A549 (cell line): ENCODE measurements at regions of chr15 and their contacts with region 1.

Region 1: GRCh38 chr15:88904624-88905327 is 8.4 kb downstream of the MFGE8 start:
- DNase-seq: peak; percentile 82 to 89
- ATAC-seq: peak; percentile 64 to 88
- H3K4me3 ChIP-seq: no peak overlapping the region
- H3K27ac ChIP-seq: peak overlapping the region; percentile 49 to 71
- H3K4me1 ChIP-seq: peaks cover 33% of the 10 kb centered on the region
- CTCF ChIP-seq: peak; percentile 99
- EP300 ChIP-seq: no peak
- POLR2A ChIP-seq: no peak
- RAD21 ChIP-seq: peak; percentile 97

Region 2: GRCh38 chr15:88571153-88571851 is 333.5 kb before region 1 on chr15:
- CTCF ChIA-PET with region 1: no interaction called
- POLR2A ChIA-PET with region 1: no interaction called
- DNase-seq: no peak
- ATAC-seq: no peak
- H3K4me3 ChIP-seq: no peak overlapping the region
- H3K27ac ChIP-seq: no peak overlapping the region
- H3K4me1 ChIP-seq: no peaks in the 10 kb centered on the region
- CTCF ChIP-seq: no peak
- EP300 ChIP-seq: no peak
- POLR2A ChIP-seq: no peak
- RAD21 ChIP-seq: no peak

Region 3: DNA sequence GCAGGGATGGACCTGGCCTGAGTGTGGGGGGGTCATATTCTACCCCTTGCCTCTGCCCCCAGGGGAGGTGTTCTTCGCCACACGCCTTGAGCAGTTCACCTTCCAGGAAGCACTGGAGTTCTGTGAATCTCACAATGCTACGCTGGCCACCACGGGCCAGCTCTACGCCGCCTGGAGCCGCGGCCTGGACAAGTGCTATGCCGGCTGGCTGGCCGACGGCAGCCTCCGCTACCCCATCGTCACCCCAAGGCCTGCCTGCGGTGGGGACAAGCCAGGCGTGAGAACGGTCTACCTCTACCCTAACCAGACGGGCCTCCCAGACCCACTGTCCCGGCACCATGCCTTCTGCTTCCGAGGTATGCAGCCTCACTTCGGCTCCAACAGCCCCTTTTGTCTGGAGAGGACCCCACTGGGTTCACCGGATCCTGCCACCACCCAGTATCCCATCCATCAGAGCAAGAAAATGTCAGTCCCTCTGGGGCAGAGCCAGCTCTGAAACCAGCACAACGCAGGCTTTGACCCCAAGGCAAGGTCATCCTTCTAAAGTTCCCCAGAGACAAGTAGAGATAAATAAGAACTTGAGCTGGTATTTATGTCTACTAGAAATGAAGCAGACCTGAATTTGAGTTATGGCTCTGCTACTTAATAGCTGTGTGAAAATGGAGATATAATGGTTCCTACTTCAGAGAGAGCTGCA is 55.3 kb before region 1 on chr15:
- CTCF ChIA-PET with region 1: no interaction called
- POLR2A ChIA-PET with region 1: no interaction called
- DNase-seq: no peak
- ATAC-seq: no peak
- H3K4me3 ChIP-seq: no peak overlapping the region
- H3K27ac ChIP-seq: no peak overlapping the region
- H3K4me1 ChIP-seq: no peaks in the 10 kb centered on the region
- CTCF ChIP-seq: no peak
- EP300 ChIP-seq: no peak
- POLR2A ChIP-seq: no peak
- RAD21 ChIP-seq: no peak

Region 4: GRCh38 chr15:88878720-88879184 is 26.0 kb before region 1 on chr15:
- CTCF ChIA-PET with region 1: interaction called, 212 read pairs
- POLR2A ChIA-PET with region 1: no interaction called
- DNase-seq: peak; percentile 68 to 87
- ATAC-seq: peak; percentile 91 to 95
- H3K4me3 ChIP-seq: no peak overlapping the region
- H3K27ac ChIP-seq: no peak overlapping the region
- H3K4me1 ChIP-seq: no peaks in the 10 kb centered on the region
- CTCF ChIP-seq: peak; percentile 78
- EP300 ChIP-seq: no peak
- POLR2A ChIP-seq: no peak
- RAD21 ChIP-seq: peak; percentile 70 to 82

Region 5: DNA sequence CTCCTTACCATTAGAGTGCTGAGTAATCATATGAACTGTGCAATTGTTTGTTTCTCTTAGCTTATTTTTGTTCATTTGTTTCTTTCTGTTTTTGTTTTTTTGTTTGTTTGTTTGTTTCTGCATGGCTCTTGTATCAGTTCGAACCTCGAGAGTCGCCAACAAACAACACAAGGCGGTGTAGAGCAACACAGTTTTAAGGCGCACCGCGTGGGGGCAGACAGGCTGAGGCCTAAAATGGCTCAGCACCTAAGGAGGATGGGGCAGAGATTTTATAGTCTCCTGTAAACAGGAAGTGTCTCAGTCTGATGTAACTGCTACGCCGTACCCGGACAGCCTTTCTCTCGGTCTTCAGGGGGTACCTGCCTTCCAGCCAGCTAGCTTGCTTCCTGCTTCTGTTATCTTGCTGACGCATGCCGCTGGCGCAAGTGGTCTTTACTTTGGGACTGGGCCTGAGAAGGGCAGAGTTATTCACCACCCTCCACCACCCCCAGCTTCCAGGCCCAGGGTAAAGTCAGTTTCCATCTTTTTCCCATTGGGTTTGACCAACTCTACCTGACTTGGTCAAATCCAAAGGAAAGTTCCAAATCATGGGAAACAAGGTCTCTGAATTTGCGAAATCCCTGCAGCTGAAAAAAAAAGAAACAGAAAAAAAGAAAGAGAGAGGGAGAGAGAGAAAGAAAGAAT is 34.2 kb after region 1 on chr15:
- CTCF ChIA-PET with region 1: interaction called, 11 read pairs
- POLR2A ChIA-PET with region 1: no interaction called
- DNase-seq: no peak
- ATAC-seq: no peak
- H3K4me3 ChIP-seq: no peak overlapping the region
- H3K27ac ChIP-seq: peak overlapping the region in 1 of 2 experiments; percentile 28; a peak in 1 of 6 replicates
- H3K4me1 ChIP-seq: no peaks in the 10 kb centered on the region
- CTCF ChIP-seq: no peak
- EP300 ChIP-seq: no peak
- POLR2A ChIP-seq: no peak
- RAD21 ChIP-seq: no peak

Region 6: GRCh38 chr15:88982304-88982945 is 77.6 kb after region 1 on chr15:
- CTCF ChIA-PET with region 1: interaction called, 851 read pairs
- POLR2A ChIA-PET with region 1: interaction called, 11 read pairs
- DNase-seq: peak; percentile 72 to 86
- ATAC-seq: peak; percentile 78 to 89
- H3K4me3 ChIP-seq: no peak overlapping the region
- H3K27ac ChIP-seq: peak overlapping the region; percentile 87 to 89
- H3K4me1 ChIP-seq: peaks cover 57% of the 10 kb centered on the region
- CTCF ChIP-seq: no peak
- EP300 ChIP-seq: peak in 1 of 2 experiments; percentile 28; a peak in 2 of 5 replicates
- POLR2A ChIP-seq: no peak; the same call in none of the 2 replicates
- RAD21 ChIP-seq: no peak; a peak in 2 of 5 replicates

Region 7: GRCh38 chr15:89034288-89034687 is 129.5 kb after region 1 on chr15:
- CTCF ChIA-PET with region 1: interaction called, 57 read pairs
- POLR2A ChIA-PET with region 1: interaction called, 3 read pairs
- DNase-seq: peak; percentile 54 to 62
- ATAC-seq: peak; percentile 56 to 76; a peak in 5 of 6 replicates
- H3K4me3 ChIP-seq: no peak overlapping the region
- H3K27ac ChIP-seq: no peak overlapping the region
- H3K4me1 ChIP-seq: no peaks in the 10 kb centered on the region
- CTCF ChIP-seq: peak; percentile 62
- EP300 ChIP-seq: no peak
- POLR2A ChIP-seq: no peak
- RAD21 ChIP-seq: peak; percentile 63 to 78

Region 8: DNA sequence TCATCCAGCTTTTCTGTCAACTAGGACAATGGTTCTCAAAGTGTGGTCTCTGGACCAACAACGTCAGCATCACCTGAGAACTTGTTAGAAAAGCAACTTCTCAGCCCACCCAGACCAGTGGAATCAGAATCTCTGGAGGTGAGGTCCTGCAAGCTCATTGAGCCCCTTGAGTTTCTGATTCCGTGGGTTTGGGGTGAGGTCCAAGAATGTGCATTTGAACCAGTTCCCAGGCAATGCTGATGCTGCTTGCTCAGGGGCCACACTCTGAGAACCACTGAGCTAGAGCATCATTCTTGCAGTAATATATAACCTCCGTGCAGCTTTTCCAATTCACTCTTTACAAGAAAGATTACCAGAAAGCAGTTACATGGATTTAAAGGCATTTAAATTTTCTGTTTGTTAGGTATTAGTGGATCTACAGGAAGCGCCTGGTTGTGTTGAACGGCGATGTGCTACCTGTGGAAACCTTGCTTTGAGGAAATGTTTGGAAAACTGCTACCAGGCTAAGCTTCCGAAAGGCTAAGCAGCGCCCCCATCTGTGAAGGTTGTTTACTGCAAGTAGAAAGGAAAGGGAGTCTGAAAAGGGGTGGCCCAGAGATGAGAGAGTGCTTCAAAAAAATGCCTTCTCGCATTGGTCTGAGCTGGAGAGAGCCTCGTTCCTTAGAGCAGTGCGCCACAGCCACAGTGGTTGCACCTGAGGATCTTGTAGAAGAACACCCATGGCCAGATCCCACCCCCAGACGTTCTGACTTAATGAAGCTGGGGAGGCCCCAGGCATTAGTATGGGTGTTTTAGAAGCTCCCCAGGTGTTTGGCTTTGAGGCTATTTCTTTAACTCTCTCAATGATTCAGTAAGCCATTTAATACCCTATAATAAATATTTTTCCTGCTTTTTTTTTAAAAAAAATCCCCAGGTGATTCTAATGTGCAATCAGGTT is 266.6 kb after region 1 on chr15:
- CTCF ChIA-PET with region 1: interaction called, 69 read pairs
- POLR2A ChIA-PET with region 1: no interaction called
- DNase-seq: peak; percentile 71 to 74
- ATAC-seq: peak; percentile 49 to 87
- H3K4me3 ChIP-seq: no peak overlapping the region
- H3K27ac ChIP-seq: peak overlapping the region in 1 of 2 experiments; percentile 22; a peak in 1 of 6 replicates
- H3K4me1 ChIP-seq: peaks cover 21% of the 10 kb centered on the region
- CTCF ChIP-seq: peak; percentile 95
- EP300 ChIP-seq: no peak
- POLR2A ChIP-seq: no peak
- RAD21 ChIP-seq: peak; percentile 86 to 94